ENCODE measurements at regions of chr6 and their contacts with region 1.

Region 1: DNA sequence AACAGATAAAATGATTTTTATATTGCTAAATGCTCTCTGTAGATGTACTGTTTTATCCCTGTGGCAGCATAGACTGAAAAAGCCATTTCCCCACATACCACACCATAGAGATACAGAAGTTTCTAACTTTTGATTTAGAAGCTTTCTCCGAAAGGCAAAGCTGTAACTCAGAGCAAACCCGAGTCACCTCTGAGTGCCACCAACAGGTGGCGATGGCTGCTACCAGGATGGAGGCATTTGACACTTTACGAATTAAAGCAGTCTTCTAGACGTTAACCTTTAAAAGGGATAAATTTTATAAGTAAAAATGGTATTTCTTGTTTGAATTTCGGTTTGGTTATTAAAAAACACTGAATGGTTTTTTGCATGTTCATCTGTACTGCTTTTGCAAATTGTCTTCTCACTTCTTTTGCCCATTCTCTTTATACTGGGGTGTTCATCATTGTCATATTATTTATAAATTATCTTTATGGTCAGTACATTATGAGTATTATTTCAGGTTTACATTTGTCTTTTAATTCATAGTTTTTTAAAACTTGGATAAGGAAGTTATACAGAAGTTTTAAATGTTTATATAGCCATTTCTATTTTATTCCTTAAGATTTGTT is 201.0 kb upstream of the CEP162 start:
- DNase-seq: peak; percentile 44
- ATAC-seq: peak; percentile 81
- H3K4me3 ChIP-seq: no peak overlapping the region
- H3K27ac ChIP-seq: no peak overlapping the region
- H3K4me1 ChIP-seq: no peaks in the 10 kb centered on the region
- H3K27me3 ChIP-seq: peaks cover 22% of the 10 kb centered on the region; the same call in 1 of the 2 replicates
- CTCF ChIP-seq: peak; percentile 69 to 91 (median 88)
- POLR2A ChIP-seq: no peak
- RAD21 ChIP-seq: peak; percentile 80

Region 2: DNA sequence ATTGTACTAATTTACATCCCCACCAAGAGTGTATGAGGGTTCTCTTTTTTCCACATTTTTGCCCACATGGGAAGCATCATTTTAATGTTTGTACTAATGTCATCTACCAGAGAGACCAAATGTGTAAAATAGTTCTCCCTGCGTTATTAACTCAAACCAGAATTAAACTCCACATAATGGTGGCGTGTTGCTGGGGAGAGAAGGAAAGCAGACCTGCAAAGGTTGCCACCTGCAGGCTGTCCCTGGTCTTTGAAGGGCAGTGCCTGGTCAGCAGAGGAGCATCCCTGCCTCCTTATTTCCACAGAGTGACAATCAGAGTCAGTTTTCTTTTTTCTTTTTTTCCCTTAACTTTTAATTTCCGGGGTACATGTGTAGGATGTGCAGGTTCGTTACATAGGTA is 121.5 kb after region 1 on chr6:
- CTCF ChIA-PET with region 1: interaction called, 4 read pairs
- POLR2A ChIA-PET with region 1: no interaction called
- RAD21 ChIA-PET with region 1: no interaction called
- intact Hi-C with region 1: loop called (anchors 2 kb)
- DNase-seq: no peak
- ATAC-seq: peak; percentile 82
- H3K4me3 ChIP-seq: no peak overlapping the region
- H3K27ac ChIP-seq: no peak overlapping the region
- H3K4me1 ChIP-seq: peaks cover 0 to 6% of the 10 kb centered on the region in 2 experiments; a peak in 1 of 4 replicates
- H3K27me3 ChIP-seq: no peaks in the 10 kb centered on the region
- CTCF ChIP-seq: peak; percentile 26 to 50 (median 49); a peak in 5 of 6 replicates
- POLR2A ChIP-seq: no peak
- RAD21 ChIP-seq: peak; percentile 44

Region 3: GRCh38 chr6:84568971-84569370 is 140.6 kb after region 1 on chr6:
- CTCF ChIA-PET with region 1: interaction called, 5 read pairs
- POLR2A ChIA-PET with region 1: no interaction called
- RAD21 ChIA-PET with region 1: no interaction called
- intact Hi-C with region 1: loop called (anchors 5 kb)
- DNase-seq: peak; percentile 10
- ATAC-seq: peak; percentile 55
- H3K4me3 ChIP-seq: no peak overlapping the region
- H3K27ac ChIP-seq: no peak overlapping the region
- H3K4me1 ChIP-seq: no peaks in the 10 kb centered on the region
- H3K27me3 ChIP-seq: no peaks in the 10 kb centered on the region
- CTCF ChIP-seq: peak; percentile 26 to 49 (median 45); a peak in 4 of 6 replicates
- POLR2A ChIP-seq: no peak
- RAD21 ChIP-seq: peak; percentile 66

Region 4: GRCh38 chr6:84652356-84653026 is 224.1 kb after region 1 on chr6:
- CTCF ChIA-PET with region 1: no interaction called
- POLR2A ChIA-PET with region 1: no interaction called
- RAD21 ChIA-PET with region 1: no interaction called
- intact Hi-C with region 1: no loop called
- DNase-seq: no peak
- ATAC-seq: no peak
- H3K4me3 ChIP-seq: no peak overlapping the region
- H3K27ac ChIP-seq: no peak overlapping the region
- H3K4me1 ChIP-seq: no peaks in the 10 kb centered on the region
- H3K27me3 ChIP-seq: no peaks in the 10 kb centered on the region
- CTCF ChIP-seq: no peak
- POLR2A ChIP-seq: no peak
- RAD21 ChIP-seq: no peak

Region 5: DNA sequence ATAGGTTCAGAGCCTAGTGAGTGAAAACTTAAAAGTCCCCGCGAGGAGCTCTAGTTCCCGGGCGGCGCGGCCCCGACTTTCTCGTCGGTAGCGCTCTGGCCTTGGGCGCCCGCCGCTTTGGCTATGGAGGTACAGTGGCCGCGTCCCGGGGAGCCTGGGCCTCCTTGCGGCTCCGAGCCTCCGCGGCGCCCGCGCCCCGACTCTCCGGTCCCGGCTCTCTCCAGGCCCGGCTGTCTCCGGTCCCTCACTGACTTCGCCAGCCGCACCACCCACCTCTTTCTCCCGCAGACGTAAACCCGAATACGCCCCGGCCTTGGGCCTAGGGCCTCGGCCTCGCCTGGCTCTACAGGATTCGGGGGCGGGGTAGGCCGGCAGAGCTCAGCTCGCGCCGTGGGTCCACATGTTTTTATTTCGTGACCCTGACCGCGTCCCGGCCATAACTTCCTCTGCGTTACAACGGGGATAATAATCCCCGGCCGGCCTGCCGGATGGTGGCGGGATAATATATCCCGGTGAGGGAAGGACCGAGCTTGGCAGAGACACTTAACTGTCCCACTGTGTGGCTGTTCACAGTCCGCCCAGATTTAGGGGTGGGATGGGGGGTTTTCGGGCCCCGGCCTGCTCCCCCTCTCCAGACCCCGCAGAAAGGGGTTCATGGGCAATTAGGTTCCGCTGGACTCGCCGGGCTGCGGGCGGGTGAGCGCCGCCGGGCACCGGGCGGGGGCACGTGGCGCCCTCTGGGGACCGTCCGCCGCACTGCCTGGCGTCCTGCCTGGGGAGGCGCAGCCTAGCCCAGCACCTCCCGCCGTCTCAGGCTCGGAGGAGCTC is 346.0 kb after region 1 on chr6:
- CTCF ChIA-PET with region 1: interaction called, 6 read pairs
- POLR2A ChIA-PET with region 1: no interaction called
- RAD21 ChIA-PET with region 1: no interaction called
- intact Hi-C with region 1: loop called (anchors 10 kb)
- DNase-seq: no peak
- ATAC-seq: peak; percentile 83
- H3K4me3 ChIP-seq: peak overlapping the region; percentile 49 to 61
- H3K27ac ChIP-seq: peak overlapping the region; percentile 64
- H3K4me1 ChIP-seq: peaks cover 0 to 9% of the 10 kb centered on the region in 2 experiments; a peak in 2 of 4 replicates
- H3K27me3 ChIP-seq: peaks cover 5% of the 10 kb centered on the region; the same call in 1 of the 2 replicates
- CTCF ChIP-seq: peak; percentile 43 to 58 (median 56); a peak in 5 of 6 replicates
- POLR2A ChIP-seq: no peak
- RAD21 ChIP-seq: peak; percentile 45